AG04450 (cell line): ENCODE measurements at regions of chr15 and their contacts with region 1.

Region 1: GRCh38 chr15:71575474-71576045 is 234.8 kb upstream of the NR2E3 start:
- DNase-seq: no peak
- H3K4me3 ChIP-seq: no peak overlapping the region
- H3K27ac ChIP-seq: no peak overlapping the region
- H3K27me3 ChIP-seq: no peaks in the 10 kb centered on the region
- CTCF ChIP-seq: peak; percentile 61

Region 2: GRCh38 chr15:71469413-71469812 is 106.1 kb before region 1 on chr15:
- CTCF ChIA-PET with region 1: no interaction called
- POLR2A ChIA-PET with region 1: no interaction called
- DNase-seq: no peak
- H3K4me3 ChIP-seq: no peak overlapping the region
- H3K27ac ChIP-seq: no peak overlapping the region
- H3K27me3 ChIP-seq: no peaks in the 10 kb centered on the region
- CTCF ChIP-seq: peak; percentile 25; the same call in 1 of the 2 replicates

Region 3: DNA sequence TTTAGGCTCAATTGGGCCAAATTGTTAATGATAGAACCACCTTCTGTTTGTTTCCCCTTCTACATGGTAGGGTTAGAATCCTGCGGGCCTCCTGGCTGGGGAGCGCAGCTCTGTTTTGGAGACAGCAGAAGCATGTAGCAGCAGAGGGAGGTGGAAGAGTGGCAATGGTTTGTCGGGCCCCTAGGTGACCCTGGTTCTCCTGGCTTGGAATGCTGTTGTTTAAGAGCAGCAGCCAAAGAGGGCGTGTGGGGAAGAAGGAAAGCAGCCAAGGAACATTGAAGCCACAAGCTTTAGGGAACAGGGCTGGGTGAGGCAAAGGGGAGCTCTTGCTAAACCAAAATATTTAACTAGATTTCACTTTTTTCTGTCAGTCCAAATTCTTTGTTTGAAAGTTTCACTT is 21.1 kb after region 1 on chr15:
- CTCF ChIA-PET with region 1: interaction called, 15 read pairs
- POLR2A ChIA-PET with region 1: no interaction called
- DNase-seq: no peak
- H3K4me3 ChIP-seq: no peak overlapping the region
- H3K27ac ChIP-seq: no peak overlapping the region
- H3K27me3 ChIP-seq: no peaks in the 10 kb centered on the region
- CTCF ChIP-seq: no peak

Region 4: DNA sequence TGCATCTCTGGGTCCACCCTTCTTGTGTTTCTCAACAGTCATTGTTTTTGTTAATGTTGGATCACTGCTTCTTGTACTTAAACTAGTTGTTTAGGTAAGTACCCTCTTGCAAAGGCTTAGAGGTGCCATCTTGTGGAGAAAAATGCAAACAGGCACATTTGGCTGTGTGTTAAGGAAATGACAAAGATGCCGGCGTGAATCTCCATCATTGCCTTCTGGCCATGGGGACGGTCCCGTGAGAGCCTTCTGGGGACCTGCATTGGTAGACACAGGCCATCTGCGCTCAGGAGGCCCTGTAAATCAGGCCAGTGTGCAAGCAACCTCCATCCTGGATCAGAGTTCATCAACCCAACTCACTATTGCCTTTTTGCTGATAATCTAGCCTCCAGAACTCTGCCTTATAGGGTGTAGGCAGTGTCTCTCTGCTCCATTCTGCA is 76.2 kb after region 1 on chr15:
- CTCF ChIA-PET with region 1: interaction called, 10 read pairs
- POLR2A ChIA-PET with region 1: no interaction called
- DNase-seq: peak; percentile 66
- H3K4me3 ChIP-seq: no peak overlapping the region
- H3K27ac ChIP-seq: no peak overlapping the region
- H3K27me3 ChIP-seq: no peaks in the 10 kb centered on the region
- CTCF ChIP-seq: peak; percentile 71

Region 5: GRCh38 chr15:71730277-71731144 is 155.0 kb after region 1 on chr15:
- CTCF ChIA-PET with region 1: interaction called, 12 read pairs
- POLR2A ChIA-PET with region 1: no interaction called
- DNase-seq: peak; percentile 44
- H3K4me3 ChIP-seq: no peak overlapping the region
- H3K27ac ChIP-seq: no peak overlapping the region
- H3K27me3 ChIP-seq: no peaks in the 10 kb centered on the region
- CTCF ChIP-seq: peak; percentile 81

Region 6: GRCh38 chr15:71934446-71934845 is 358.9 kb after region 1 on chr15:
- CTCF ChIA-PET with region 1: no interaction called
- POLR2A ChIA-PET with region 1: no interaction called
- DNase-seq: no peak
- H3K4me3 ChIP-seq: no peak overlapping the region
- H3K27ac ChIP-seq: no peak overlapping the region
- H3K27me3 ChIP-seq: no peaks in the 10 kb centered on the region
- CTCF ChIP-seq: no peak